Naive thymus-derived CD4-positive, alpha-beta T cell (primary cell): ENCODE measurements at regions of chr11 and their contacts with region 1.

Region 1: DNA sequence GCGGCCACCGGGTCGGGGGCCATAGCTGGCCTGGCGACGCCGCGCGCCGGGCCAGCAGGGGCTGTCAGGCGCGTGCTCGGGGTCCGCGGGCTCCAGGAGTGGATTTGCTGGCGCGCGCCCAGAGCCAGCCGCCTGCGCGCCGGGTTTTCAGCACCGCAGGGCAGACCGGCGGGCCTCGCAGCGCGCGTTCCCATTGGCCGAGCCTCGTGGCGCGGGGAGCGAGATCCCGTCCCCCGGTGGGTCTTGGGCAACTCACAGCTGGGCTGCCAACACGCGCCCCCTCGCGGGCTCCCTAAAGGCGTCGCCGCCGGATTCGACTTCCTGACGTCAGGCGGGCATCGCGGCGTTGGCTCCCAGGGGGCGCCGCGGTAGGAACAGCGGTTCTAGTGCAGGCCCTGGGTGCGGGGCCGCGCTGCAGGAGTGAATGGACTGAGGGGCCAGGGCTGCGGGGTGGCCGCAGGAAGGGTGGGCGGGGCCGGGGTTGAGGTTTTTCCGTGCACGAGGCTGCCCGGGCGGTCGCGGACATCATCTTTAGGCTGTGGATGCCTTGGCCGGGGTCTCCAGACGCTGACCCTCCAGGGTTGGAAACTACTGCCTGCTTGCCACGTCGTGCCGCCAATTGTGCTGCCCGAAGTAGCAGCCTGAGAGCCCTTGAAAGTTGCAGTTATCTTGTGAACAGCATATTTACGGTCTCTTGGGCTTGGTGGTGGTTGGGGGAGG is at the start of gene FADS1:
- DNase-seq: peak; percentile 45 to 88 (median 60)
- ATAC-seq: peak; percentile 77
- H3K4me3 ChIP-seq: peak within 1 kb of the TSS; percentile 74
- H3K4me3 Mint-ChIP-seq: peak within 1 kb of the TSS; percentile 84 to 98 (median 92)
- H3K27ac ChIP-seq: peak within 1 kb of the TSS; percentile 51
- H3K27ac Mint-ChIP-seq: peak within 1 kb of the TSS in 5 of 9 donors; percentile 8 to 97 (median 83)
- H3K4me1 ChIP-seq: peaks cover 8 to 12% of the 10 kb centered on the region in 2 donors
- H3K4me1 Mint-ChIP-seq: peaks cover 0 to 24% (median 19%) of the 10 kb centered on the region in 7 donors
- H3K27me3 ChIP-seq: peaks cover 0 to 10% of the 10 kb centered on the region in 2 donors
- H3K27me3 Mint-ChIP-seq: peaks cover 3 to 30% (median 15%) of the 10 kb centered on the region in 5 donors
- total RNA-seq, gene FADS1: 0.62 to 52.1 (median 2.3) TPM

Region 2: GRCh38 chr11:61764606-61765260 is 52.2 kb before region 1 on chr11:
- CTCF ChIA-PET with region 1: no interaction called
- POLR2A ChIA-PET with region 1: no interaction called
- intact Hi-C with region 1: no loop called
- DNase-seq: no peak
- ATAC-seq: no peak
- H3K4me3 ChIP-seq: no peak overlapping the region
- H3K4me3 Mint-ChIP-seq: no peak overlapping the region
- H3K27ac ChIP-seq: no peak overlapping the region
- H3K27ac Mint-ChIP-seq: no peak overlapping the region
- H3K4me1 ChIP-seq: no peaks in the 10 kb centered on the region
- H3K4me1 Mint-ChIP-seq: no peaks in the 10 kb centered on the region
- H3K27me3 ChIP-seq: no peaks in the 10 kb centered on the region
- H3K27me3 Mint-ChIP-seq: peaks cover 0 to 6% (median 0%) of the 10 kb centered on the region in 5 donors

Region 3: GRCh38 chr11:61827571-61828378 is 10.9 kb after region 1 on chr11 and contains the start of gene FADS2:
- CTCF ChIA-PET with region 1: interaction called, 3 read pairs
- POLR2A ChIA-PET with region 1: no interaction called
- intact Hi-C with region 1: loop called (anchors 1 kb)
- DNase-seq: peak; percentile 44 to 94 (median 65)
- ATAC-seq: peak; percentile 92
- H3K4me3 ChIP-seq: peak within 1 kb of the TSS; percentile 64
- H3K4me3 Mint-ChIP-seq: peak within 1 kb of the TSS; percentile 77 to 91 (median 84)
- H3K27ac ChIP-seq: peak within 1 kb of the TSS; percentile 43
- H3K27ac Mint-ChIP-seq: peak within 1 kb of the TSS in 4 of 9 donors; percentile 14 to 93 (median 80)
- H3K4me1 ChIP-seq: peaks cover 5 to 11% of the 10 kb centered on the region in 2 donors
- H3K4me1 Mint-ChIP-seq: peaks cover 10 to 51% (median 21%) of the 10 kb centered on the region in 7 donors
- H3K27me3 ChIP-seq: no peaks in the 10 kb centered on the region
- H3K27me3 Mint-ChIP-seq: peaks cover 0 to 38% (median 24%) of the 10 kb centered on the region in 5 donors
- total RNA-seq, gene FADS2: 0.19 to 192 (median 2.1) TPM

Region 4: GRCh38 chr11:61841636-61842527 is 25.0 kb after region 1 on chr11:
- CTCF ChIA-PET with region 1: no interaction called
- POLR2A ChIA-PET with region 1: no interaction called
- intact Hi-C with region 1: no loop called
- DNase-seq: no peak
- ATAC-seq: no peak
- H3K4me3 ChIP-seq: no peak overlapping the region
- H3K4me3 Mint-ChIP-seq: no peak overlapping the region
- H3K27ac ChIP-seq: no peak overlapping the region
- H3K27ac Mint-ChIP-seq: peak overlapping the region in 1 of 9 donors; percentile 46
- H3K4me1 ChIP-seq: no peaks in the 10 kb centered on the region
- H3K4me1 Mint-ChIP-seq: peaks cover 0 to 13% (median 1%) of the 10 kb centered on the region in 7 donors
- H3K27me3 ChIP-seq: no peaks in the 10 kb centered on the region
- H3K27me3 Mint-ChIP-seq: peaks cover 0 to 4% (median 0%) of the 10 kb centered on the region in 5 donors

Region 5: GRCh38 chr11:61891331-61892084 is 74.6 kb after region 1 on chr11 and contains the start of gene FADS3:
- CTCF ChIA-PET with region 1: no interaction called
- POLR2A ChIA-PET with region 1: no interaction called
- intact Hi-C with region 1: loop called in 1 of 2 experiments (anchors 1 kb)
- DNase-seq: peak; percentile 39 to 78 (median 45)
- ATAC-seq: peak; percentile 77
- H3K4me3 ChIP-seq: peak within 1 kb of the TSS; percentile 64
- H3K4me3 Mint-ChIP-seq: peak within 1 kb of the TSS; percentile 73 to 93 (median 82)
- H3K27ac ChIP-seq: peak within 1 kb of the TSS; percentile 69
- H3K27ac Mint-ChIP-seq: peak within 1 kb of the TSS in 7 of 9 donors; percentile 36 to 86 (median 73)
- H3K4me1 ChIP-seq: peaks cover 9% of the 10 kb centered on the region in 2 donors
- H3K4me1 Mint-ChIP-seq: peaks cover 0 to 11% (median 4%) of the 10 kb centered on the region in 7 donors
- H3K27me3 ChIP-seq: no peaks in the 10 kb centered on the region
- H3K27me3 Mint-ChIP-seq: peaks cover 0 to 10% (median 0%) of the 10 kb centered on the region in 5 donors
- total RNA-seq, gene FADS3: 1.4 to 8.6 (median 6.2) TPM

Region 6: GRCh38 chr11:61930933-61931332 is 114.0 kb after region 1 on chr11:
- CTCF ChIA-PET with region 1: no interaction called
- POLR2A ChIA-PET with region 1: no interaction called
- intact Hi-C with region 1: no loop called
- DNase-seq: no peak
- ATAC-seq: no peak
- H3K4me3 ChIP-seq: no peak overlapping the region
- H3K4me3 Mint-ChIP-seq: no peak overlapping the region
- H3K27ac ChIP-seq: no peak overlapping the region
- H3K27ac Mint-ChIP-seq: no peak overlapping the region
- H3K4me1 ChIP-seq: no peaks in the 10 kb centered on the region
- H3K4me1 Mint-ChIP-seq: no peaks in the 10 kb centered on the region
- H3K27me3 ChIP-seq: no peaks in the 10 kb centered on the region
- H3K27me3 Mint-ChIP-seq: peaks cover 20 to 27% (median 24%) of the 10 kb centered on the region in 5 donors

Region 7: GRCh38 chr11:62025487-62026105 is 208.7 kb after region 1 on chr11:
- CTCF ChIA-PET with region 1: no interaction called
- POLR2A ChIA-PET with region 1: no interaction called
- intact Hi-C with region 1: loop called in 1 of 2 experiments (anchors 1 kb)
- DNase-seq: peak; percentile 45 to 97 (median 93)
- ATAC-seq: peak; percentile 91
- H3K4me3 ChIP-seq: peak overlapping the region; percentile 11
- H3K4me3 Mint-ChIP-seq: peak overlapping the region; percentile 68 to 84 (median 76)
- H3K27ac ChIP-seq: peak overlapping the region; percentile 93
- H3K27ac Mint-ChIP-seq: peak overlapping the region; percentile 95 to 100 (median 99)
- H3K4me1 ChIP-seq: peaks cover 9 to 17% of the 10 kb centered on the region in 2 donors
- H3K4me1 Mint-ChIP-seq: peaks cover 6 to 28% (median 24%) of the 10 kb centered on the region in 7 donors
- H3K27me3 ChIP-seq: no peaks in the 10 kb centered on the region
- H3K27me3 Mint-ChIP-seq: no peaks in the 10 kb centered on the region